ENCODE measurements at regions of chr7 and their contacts with region 1.

Region 1: GRCh38 chr7:107072133-107072532 is 27.6 kb downstream of the PRKAR2B start:
- DNase-seq: no peak
- H3K4me3 ChIP-seq: no peak overlapping the region
- H3K27ac ChIP-seq: no peak overlapping the region
- H3K4me1 ChIP-seq: no peaks in the 10 kb centered on the region
- H3K27me3 ChIP-seq: no peaks in the 10 kb centered on the region
- CTCF ChIP-seq: no peak

Region 2: DNA sequence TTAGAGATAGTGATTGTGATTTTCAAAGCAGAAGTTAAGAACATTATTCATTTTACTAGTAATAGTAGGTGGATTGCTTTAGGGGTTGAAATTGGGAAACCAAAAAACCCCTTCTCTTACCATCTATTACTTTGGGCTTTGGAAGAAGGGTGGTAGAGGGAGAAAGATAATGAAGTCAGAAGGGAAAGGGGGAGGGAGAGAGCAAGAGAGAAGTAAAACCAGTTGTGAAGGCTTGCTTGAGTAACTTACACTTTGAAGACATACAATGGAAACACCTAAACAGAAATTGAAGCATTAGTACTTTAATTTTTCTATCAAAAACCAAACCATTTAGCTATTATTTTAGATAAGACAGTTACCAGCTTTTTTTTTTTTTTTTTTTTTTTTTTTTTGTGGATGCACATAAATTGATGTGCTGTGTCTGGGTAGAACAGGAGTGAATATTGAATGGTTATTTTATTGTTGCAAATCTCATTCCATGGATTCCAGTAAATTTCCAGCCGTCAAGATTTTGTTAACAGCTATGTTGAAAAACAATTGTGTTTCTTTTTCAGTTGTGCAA is 22.1 kb before region 1 on chr7:
- CTCF ChIA-PET with region 1: no interaction called
- POLR2A ChIA-PET with region 1: interaction called, 12 read pairs
- intact Hi-C with region 1: no loop called
- DNase-seq: no peak
- H3K4me3 ChIP-seq: no peak overlapping the region
- H3K27ac ChIP-seq: no peak overlapping the region
- H3K4me1 ChIP-seq: peaks cover 15% of the 10 kb centered on the region
- H3K27me3 ChIP-seq: no peaks in the 10 kb centered on the region
- CTCF ChIP-seq: no peak

Measured in A673 (cell line).